ENCODE measurements at regions of chr1 and their contacts with region 1.

Region 1: GRCh38 chr1:151934048-151934493 is 24.8 kb upstream of the THEM4 start:
- DNase-seq: no peak
- ATAC-seq: peak; percentile 70 to 80 (median 78)
- H3K4me3 ChIP-seq: no peak overlapping the region
- H3K27ac ChIP-seq: no peak overlapping the region
- H3K4me1 ChIP-seq: no peaks in the 10 kb centered on the region
- H3K27me3 ChIP-seq: peaks cover 0 to 3% (median 0%) of the 10 kb centered on the region in 3 donors
- CTCF ChIP-seq: peak; percentile 79

Region 2: GRCh38 chr1:151881456-151881855 is 52.6 kb before region 1 on chr1:
- intact Hi-C with region 1: no loop called
- DNase-seq: no peak
- ATAC-seq: no peak
- H3K4me3 ChIP-seq: no peak overlapping the region
- H3K27ac ChIP-seq: no peak overlapping the region
- H3K4me1 ChIP-seq: no peaks in the 10 kb centered on the region
- H3K27me3 ChIP-seq: no peaks in the 10 kb centered on the region
- CTCF ChIP-seq: no peak

Region 3: GRCh38 chr1:151993654-151994496 is 59.8 kb after region 1 on chr1 and contains the start of gene S100A10:
- intact Hi-C with region 1: loop called in 1 of 2 experiments (anchors 5 kb)
- DNase-seq: peak; percentile 80 to 89
- ATAC-seq: peak; percentile 60 to 73 (median 64)
- H3K4me3 ChIP-seq: peak within 1 kb of the TSS; percentile 78
- H3K27ac ChIP-seq: peak within 1 kb of the TSS; percentile 76
- H3K4me1 ChIP-seq: peaks cover 16% of the 10 kb centered on the region
- H3K27me3 ChIP-seq: peaks cover 0 to 49% (median 4%) of the 10 kb centered on the region in 3 donors
- CTCF ChIP-seq: no peak
- total RNA-seq, gene S100A10: 41.8 to 150 (median 59.9) TPM

Region 4: GRCh38 chr1:152001391-152002249 is 67.5 kb after region 1 on chr1:
- intact Hi-C with region 1: loop called in 1 of 2 experiments (anchors 2 kb)
- DNase-seq: peak; percentile 88 to 89
- ATAC-seq: peak; percentile 74 to 87 (median 76)
- H3K4me3 ChIP-seq: no peak overlapping the region
- H3K27ac ChIP-seq: peak overlapping the region; percentile 18
- H3K4me1 ChIP-seq: peaks cover 3% of the 10 kb centered on the region
- H3K27me3 ChIP-seq: peaks cover 0 to 11% (median 0%) of the 10 kb centered on the region in 3 donors
- CTCF ChIP-seq: peak; percentile 88

Measured in psoas muscle (tissue), 8 donors.